MCF 10A (cell line): ENCODE measurements at regions of chr20 and their contacts with region 1.

Region 1: DNA sequence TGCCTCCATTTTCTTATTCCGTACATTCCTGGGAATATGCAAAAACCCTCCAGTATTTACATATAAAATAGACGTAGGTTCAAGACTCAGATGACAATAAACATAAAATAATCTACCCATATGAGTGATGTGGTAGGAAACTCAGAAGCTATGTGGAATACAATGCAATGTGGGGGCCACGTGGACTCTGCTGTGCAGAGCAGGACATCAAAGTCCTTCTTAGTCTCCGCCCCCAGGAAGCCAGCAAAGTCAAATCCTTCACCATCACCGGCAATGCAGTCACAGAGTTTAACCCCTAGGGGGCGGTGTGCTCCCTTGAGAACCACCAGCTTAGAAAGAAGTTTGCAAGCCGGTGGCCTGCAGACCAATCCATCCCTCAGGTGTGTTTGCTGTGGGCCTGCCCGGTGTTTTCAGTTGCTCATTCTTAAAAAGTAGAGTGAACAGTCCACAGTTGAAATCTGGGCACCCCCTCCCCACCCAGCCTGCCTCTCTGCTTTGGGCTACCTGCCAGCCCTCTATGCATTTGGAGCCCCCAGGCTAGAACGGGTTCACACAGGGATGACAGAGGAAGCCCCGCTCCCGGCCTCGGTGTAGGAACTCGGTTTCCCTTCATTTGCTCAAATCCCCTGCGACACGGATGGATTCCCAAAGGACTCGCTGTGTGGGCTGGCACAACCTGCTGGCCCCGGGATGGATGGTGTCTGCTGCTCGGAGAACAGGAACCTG is 59.9 kb downstream of the SULF2 start:
- DNase-seq: peak; percentile 86
- H3K4me3 Mint-ChIP-seq: no peak overlapping the region
- H3K27ac Mint-ChIP-seq: no peak overlapping the region
- H3K4me1 Mint-ChIP-seq: no peaks in the 10 kb centered on the region
- H3K27me3 Mint-ChIP-seq: no peaks in the 10 kb centered on the region
- CTCF ChIP-seq: peak; percentile 94

Region 2: DNA sequence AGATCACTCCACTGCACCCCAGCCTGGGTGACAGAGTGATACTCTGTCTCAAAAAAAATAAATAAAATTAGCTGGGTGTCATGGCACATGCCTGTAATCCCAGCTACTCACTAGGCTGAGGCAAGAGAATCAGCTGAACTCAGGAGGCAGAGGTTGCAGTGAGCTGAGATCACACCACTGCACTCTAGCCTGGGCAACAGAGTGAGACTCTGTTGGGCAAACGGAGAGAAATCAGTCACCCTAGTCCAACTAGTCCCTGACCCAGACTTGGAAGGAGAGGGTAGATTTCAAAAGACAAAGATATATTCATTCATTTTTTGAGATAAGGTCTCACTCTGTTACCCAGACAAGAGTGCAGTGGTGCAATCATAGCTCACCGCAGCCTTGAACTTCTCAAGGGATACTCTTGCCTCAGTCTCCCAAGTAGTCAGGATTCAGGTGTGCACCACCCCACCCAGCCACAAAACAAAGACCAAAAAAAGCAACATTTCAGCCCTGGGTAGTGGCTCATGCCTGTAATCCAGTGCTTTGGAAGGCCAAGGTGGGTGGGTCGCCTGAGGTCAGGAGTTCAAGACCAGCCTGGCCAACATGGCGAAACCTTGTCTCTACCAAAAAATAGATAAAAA is 249.9 kb before region 1 on chr20:
- CTCF ChIA-PET with region 1: no interaction called
- POLR2A ChIA-PET with region 1: no interaction called
- intact Hi-C with region 1: no loop called
- DNase-seq: no peak
- H3K4me3 Mint-ChIP-seq: no peak overlapping the region
- H3K27ac Mint-ChIP-seq: no peak overlapping the region
- H3K4me1 Mint-ChIP-seq: peaks cover 4% of the 10 kb centered on the region
- H3K27me3 Mint-ChIP-seq: no peaks in the 10 kb centered on the region
- CTCF ChIP-seq: no peak

Region 3: DNA sequence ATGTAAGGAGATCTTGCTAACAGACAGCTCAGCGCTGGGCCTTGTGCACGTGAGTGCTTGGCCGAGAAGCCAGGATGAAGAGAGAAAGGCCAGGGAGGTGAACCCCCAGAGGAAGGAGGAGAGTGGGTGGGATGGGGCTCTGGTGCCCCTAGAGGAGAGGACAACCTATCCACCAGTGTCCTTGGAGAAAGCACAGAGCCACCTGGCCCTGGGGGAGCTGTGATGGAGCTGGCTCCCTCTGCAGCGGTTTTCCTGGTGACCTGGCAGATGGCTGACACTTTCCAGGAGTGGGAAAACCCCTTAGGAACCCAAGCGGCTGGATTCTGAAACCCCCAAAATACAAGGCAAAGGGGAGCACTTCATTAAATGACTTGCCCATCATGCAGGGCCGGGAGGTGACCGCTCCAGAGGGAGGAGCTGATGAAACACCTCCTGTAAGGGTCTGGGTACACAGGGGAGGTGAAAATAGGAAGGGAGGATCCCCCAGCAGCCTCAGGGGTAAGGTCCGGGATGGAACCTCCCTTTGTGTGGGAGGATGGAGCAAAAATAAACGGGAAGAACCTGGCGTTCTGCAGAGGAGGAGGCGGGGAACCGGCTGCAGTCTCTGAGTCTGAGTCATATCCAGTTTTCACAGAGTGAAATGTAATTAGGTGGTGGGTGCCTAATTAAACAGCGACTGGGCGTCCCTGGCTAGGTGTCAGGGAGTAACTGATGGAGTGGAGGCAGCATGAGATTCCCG is 20.5 kb before region 1 on chr20:
- CTCF ChIA-PET with region 1: interaction called, 10 read pairs
- POLR2A ChIA-PET with region 1: no interaction called
- intact Hi-C with region 1: no loop called
- DNase-seq: peak; percentile 33
- H3K4me3 Mint-ChIP-seq: peak overlapping the region; percentile 29
- H3K27ac Mint-ChIP-seq: peak overlapping the region; percentile 19
- H3K4me1 Mint-ChIP-seq: peaks cover 12% of the 10 kb centered on the region
- H3K27me3 Mint-ChIP-seq: no peaks in the 10 kb centered on the region
- CTCF ChIP-seq: no peak

Region 4: DNA sequence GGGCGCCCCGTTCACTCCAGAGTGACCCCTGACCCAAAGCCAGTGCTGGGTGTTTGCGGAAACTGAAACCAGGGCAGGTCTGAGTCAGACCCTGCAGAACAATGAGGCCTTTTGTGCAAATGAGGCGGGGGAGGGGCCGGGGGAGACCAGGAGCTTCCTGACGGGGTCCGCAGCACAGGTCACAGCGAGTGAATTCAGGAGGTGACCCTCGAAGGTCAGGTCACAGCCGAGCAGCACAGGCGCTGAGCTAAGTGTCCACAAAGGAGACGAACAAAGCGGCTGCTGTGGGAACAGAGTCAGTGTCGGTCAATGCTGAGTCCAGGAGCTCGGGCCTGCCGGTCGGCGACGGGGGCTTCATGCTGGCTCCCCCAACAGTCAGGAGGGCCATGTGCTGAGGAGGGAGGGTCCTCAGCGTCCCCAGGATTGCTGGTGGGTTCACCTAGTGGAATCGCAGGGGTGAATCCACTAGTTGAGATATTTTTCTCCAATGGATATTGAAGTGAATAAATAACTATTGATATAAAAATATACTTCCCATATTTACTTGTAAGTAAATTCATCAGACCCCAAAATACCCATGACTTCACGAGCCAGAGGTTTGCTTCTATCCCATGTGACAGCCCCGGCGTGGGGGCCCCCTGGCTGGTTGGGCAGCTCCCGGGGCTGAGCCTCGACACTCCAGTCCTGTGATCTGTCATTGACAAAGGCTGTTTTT is 248.3 kb after region 1 on chr20:
- CTCF ChIA-PET with region 1: no interaction called
- POLR2A ChIA-PET with region 1: no interaction called
- intact Hi-C with region 1: no loop called
- DNase-seq: no peak
- H3K4me3 Mint-ChIP-seq: no peak overlapping the region
- H3K27ac Mint-ChIP-seq: no peak overlapping the region
- H3K4me1 Mint-ChIP-seq: peaks cover 6% of the 10 kb centered on the region
- H3K27me3 Mint-ChIP-seq: no peaks in the 10 kb centered on the region
- CTCF ChIP-seq: no peak

Region 5: GRCh38 chr20:48065824-48066660 is 340.6 kb after region 1 on chr20:
- CTCF ChIA-PET with region 1: no interaction called
- POLR2A ChIA-PET with region 1: no interaction called
- intact Hi-C with region 1: no loop called
- DNase-seq: peak; percentile 89
- H3K4me3 Mint-ChIP-seq: no peak overlapping the region
- H3K27ac Mint-ChIP-seq: peak overlapping the region; percentile 66
- H3K4me1 Mint-ChIP-seq: peaks cover 21% of the 10 kb centered on the region
- H3K27me3 Mint-ChIP-seq: no peaks in the 10 kb centered on the region
- CTCF ChIP-seq: no peak

Region 6: DNA sequence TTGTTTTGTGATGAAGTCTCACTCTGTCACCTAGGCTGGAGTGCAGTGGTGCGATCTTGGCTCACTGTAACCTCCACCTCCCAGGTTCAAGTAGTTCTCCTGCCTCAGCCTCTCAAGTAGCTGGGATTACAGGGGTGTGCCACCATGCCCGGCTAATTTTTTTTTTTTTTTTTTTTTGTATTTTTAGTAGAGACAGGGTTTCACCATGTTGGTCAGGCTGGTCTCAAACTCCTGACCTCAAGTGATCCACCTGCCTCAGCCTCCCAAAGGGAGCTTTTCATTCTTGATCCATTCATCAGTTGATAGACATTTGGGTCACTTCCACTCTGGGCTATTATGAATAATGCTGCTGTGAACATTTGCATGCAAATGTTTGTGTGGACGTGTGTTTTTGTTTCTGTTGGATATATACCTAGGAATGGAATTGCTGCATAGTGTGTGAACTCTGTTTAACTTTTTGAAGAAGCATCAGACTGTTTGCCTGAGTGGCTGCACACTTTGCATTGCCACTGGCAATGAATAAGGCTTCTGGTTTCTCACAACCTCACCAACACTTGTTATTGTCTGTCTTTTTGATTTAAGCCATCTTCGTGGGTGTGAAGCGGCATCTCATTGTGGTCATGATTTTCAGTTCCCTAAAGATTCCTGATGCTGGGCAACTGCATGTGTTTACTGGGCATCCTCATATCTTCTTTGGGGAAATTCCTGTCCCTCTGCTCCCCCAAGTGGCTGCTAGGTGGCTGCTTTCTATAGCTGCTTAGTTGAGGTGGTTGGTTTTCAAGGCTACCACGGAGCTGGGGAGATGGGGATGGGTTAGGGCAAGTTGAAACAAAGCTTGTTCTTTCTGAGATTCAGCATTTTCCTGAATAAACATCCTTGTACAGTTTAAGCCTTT is 463.5 kb after region 1 on chr20:
- CTCF ChIA-PET with region 1: interaction called, 3 read pairs
- POLR2A ChIA-PET with region 1: no interaction called
- intact Hi-C with region 1: loop called (anchors 1 kb)
- DNase-seq: peak; percentile 68
- H3K4me3 Mint-ChIP-seq: no peak overlapping the region
- H3K27ac Mint-ChIP-seq: no peak overlapping the region
- H3K4me1 Mint-ChIP-seq: peaks cover 23% of the 10 kb centered on the region
- H3K27me3 Mint-ChIP-seq: no peaks in the 10 kb centered on the region
- CTCF ChIP-seq: peak; percentile 37